Activated B cell treated with CpG ODN at 0.5 μM for 24 hours (primary cell): ENCODE measurements at regions of chr2 and their contacts with region 1.

Region 1: GRCh38 chr2:113198790-113199612 is 25.2 kb downstream of the PSD4 start:
- DNase-seq: peak; percentile 87
- ATAC-seq: peak; percentile 91
- H3K4me3 Mint-ChIP-seq: peak overlapping the region; percentile 76
- H3K27ac Mint-ChIP-seq: no peak overlapping the region
- H3K4me1 Mint-ChIP-seq: peaks cover 7% of the 10 kb centered on the region
- H3K27me3 Mint-ChIP-seq: no peaks in the 10 kb centered on the region
- CTCF ChIP-seq: peak; percentile 44

Region 2: DNA sequence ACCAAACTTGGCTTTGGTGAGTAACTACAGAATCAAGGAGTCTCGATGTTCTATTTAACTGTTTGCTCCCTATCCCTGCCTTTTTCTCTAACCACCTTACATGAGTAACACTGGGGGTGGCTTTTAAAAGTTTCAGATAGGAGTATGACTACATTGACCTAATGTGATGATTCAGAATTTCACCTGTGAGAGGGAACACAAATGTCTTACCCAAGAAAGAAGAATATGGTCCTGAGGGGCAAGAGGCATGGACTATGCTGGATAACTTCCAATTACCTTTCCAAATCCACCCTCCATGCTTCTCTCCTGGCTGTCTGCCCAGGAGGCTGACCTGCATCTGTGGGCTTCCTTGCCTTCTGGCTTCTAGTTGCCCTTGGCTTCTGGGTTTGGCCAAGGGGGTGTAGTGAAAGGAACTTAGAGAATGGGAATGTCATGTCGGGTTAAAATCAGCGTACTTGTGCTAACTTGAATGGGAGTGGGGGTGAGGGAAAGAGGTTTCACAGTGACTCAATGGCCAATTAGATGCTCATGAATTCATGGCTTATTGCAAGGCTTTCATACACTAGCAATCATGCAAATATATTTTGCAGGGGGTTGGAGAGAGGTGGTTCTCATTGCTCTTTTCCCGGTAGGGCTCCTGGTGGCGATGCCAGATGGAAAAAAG is 226.4 kb before region 1 on chr2:
- CTCF ChIA-PET with region 1: no interaction called
- POLR2A ChIA-PET with region 1: no interaction called
- intact Hi-C with region 1: no loop called
- DNase-seq: no peak
- ATAC-seq: no peak
- H3K4me3 Mint-ChIP-seq: no peak overlapping the region
- H3K27ac Mint-ChIP-seq: no peak overlapping the region
- H3K4me1 Mint-ChIP-seq: no peaks in the 10 kb centered on the region
- H3K27me3 Mint-ChIP-seq: peaks cover 17% of the 10 kb centered on the region
- CTCF ChIP-seq: no peak

Region 3: GRCh38 chr2:113015646-113016045 is 183.4 kb before region 1 on chr2:
- CTCF ChIA-PET with region 1: no interaction called
- POLR2A ChIA-PET with region 1: no interaction called
- intact Hi-C with region 1: no loop called
- DNase-seq: no peak
- ATAC-seq: no peak
- H3K4me3 Mint-ChIP-seq: no peak overlapping the region
- H3K27ac Mint-ChIP-seq: no peak overlapping the region
- H3K4me1 Mint-ChIP-seq: no peaks in the 10 kb centered on the region
- H3K27me3 Mint-ChIP-seq: peaks cover 37% of the 10 kb centered on the region
- CTCF ChIP-seq: no peak

Region 4: GRCh38 chr2:113157118-113157896 is 41.7 kb before region 1 on chr2:
- CTCF ChIA-PET with region 1: interaction called, 10 read pairs
- POLR2A ChIA-PET with region 1: interaction called, 6 read pairs
- intact Hi-C with region 1: loop called (anchors 5 kb)
- DNase-seq: peak; percentile 57
- ATAC-seq: peak; percentile 90
- H3K4me3 Mint-ChIP-seq: peak overlapping the region; percentile 84
- H3K27ac Mint-ChIP-seq: peak overlapping the region; percentile 70
- H3K4me1 Mint-ChIP-seq: peaks cover 17% of the 10 kb centered on the region
- H3K27me3 Mint-ChIP-seq: no peaks in the 10 kb centered on the region
- CTCF ChIP-seq: no peak